ENCODE measurements at regions of chr7 and their contacts with region 1.

Region 1: DNA sequence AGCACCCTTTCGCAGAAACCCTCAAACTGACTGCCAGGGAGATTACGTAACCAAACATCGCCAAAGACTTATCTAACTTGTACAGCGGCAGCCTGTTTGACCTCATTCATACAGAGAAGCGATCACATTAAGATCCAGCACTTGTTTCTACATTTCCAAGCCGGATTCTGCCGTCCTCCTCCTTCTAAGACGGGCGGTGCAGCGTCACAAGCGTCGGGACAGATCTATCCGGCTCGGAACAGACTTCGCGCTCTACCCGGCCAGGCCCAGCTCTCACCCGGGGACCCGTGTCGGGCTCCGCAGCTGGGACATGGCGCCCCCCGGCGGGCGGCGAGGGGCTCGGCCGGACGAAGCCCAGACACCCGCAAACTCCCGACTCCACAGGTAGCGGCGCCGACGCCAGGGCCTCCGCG is 373 bp downstream of the H2AZ2 start:
- DNase-seq: peak; percentile 86 to 93 (median 90)
- H3K4me3 ChIP-seq: peak overlapping the region; percentile 77
- H3K27ac ChIP-seq: peak overlapping the region; percentile 92 to 99
- H3K4me1 ChIP-seq: peaks cover 9% of the 10 kb centered on the region
- H3K27me3 ChIP-seq: no peaks in the 10 kb centered on the region
- CTCF ChIP-seq: peak; percentile 86 to 96 (median 94)
- EP300 ChIP-seq: no peak
- POLR2A ChIP-seq: no peak

Region 2: DNA sequence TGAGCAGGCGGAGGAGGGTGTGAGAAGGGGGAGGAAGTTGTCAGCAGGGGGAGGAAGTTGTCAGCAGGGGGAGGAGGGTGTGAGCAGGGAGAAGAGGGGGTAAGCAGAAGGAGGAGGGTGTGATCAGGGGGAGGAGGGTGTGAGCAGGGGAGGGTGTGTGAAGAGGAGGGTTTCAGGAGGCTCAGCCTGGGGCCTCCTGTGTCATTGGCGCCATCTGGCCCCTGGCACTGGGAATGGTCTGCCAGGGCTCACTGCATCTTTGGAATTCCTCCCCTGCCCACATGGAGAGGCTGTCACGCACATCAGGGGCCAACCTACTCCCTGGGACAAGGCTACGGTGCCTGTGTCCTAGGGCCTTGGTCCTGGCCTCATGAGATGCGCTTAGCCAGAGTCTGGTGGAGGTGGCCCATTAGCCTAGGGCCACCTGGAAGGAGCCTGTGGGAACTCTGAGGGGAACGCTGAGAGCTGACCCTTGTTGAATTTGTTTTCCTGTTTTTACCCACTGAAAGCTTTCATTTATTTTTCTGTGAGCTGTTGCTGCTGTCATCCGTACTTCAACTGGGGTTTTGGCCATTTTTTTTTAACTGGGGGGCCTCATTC is 540.1 kb before region 1 on chr7:
- intact Hi-C with region 1: no loop called
- DNase-seq: peak in 2 of 5 donors; percentile 12 to 34
- H3K4me3 ChIP-seq: no peak overlapping the region
- H3K27ac ChIP-seq: no peak overlapping the region
- H3K4me1 ChIP-seq: no peaks in the 10 kb centered on the region
- H3K27me3 ChIP-seq: no peaks in the 10 kb centered on the region
- CTCF ChIP-seq: no peak
- EP300 ChIP-seq: no peak
- POLR2A ChIP-seq: no peak

Region 3: GRCh38 chr7:44490351-44491200 is 356.9 kb before region 1 on chr7 and contains the start of gene NUDCD3:
- intact Hi-C with region 1: loop called in 1 of 4 experiments (anchors 10 kb)
- DNase-seq: peak; percentile 77 to 86 (median 80)
- H3K4me3 ChIP-seq: peak within 1 kb of the TSS; percentile 83
- H3K27ac ChIP-seq: peak within 1 kb of the TSS; percentile 90 to 97
- H3K4me1 ChIP-seq: peaks cover 11% of the 10 kb centered on the region
- H3K27me3 ChIP-seq: no peaks in the 10 kb centered on the region
- CTCF ChIP-seq: peak in 1 of 3 donors; percentile 21
- EP300 ChIP-seq: peak; percentile 37
- POLR2A ChIP-seq: peak; percentile 45
- total RNA-seq, gene NUDCD3: 32.1 to 117 (median 102) TPM

Region 4: GRCh38 chr7:44581879-44582603 is 265.5 kb before region 1 on chr7 and contains the start of gene TMED4:
- intact Hi-C with region 1: loop called in 1 of 4 experiments (anchors 5 kb)
- DNase-seq: peak; percentile 100
- H3K4me3 ChIP-seq: peak within 1 kb of the TSS; percentile 99
- H3K27ac ChIP-seq: peak within 1 kb of the TSS; percentile 85 to 98
- H3K4me1 ChIP-seq: peaks cover 7% of the 10 kb centered on the region
- H3K27me3 ChIP-seq: no peaks in the 10 kb centered on the region
- CTCF ChIP-seq: no peak
- EP300 ChIP-seq: no peak
- POLR2A ChIP-seq: peak; percentile 70
- total RNA-seq, gene TMED4: 74.9 to 155 (median 95.9) TPM

Region 5: DNA sequence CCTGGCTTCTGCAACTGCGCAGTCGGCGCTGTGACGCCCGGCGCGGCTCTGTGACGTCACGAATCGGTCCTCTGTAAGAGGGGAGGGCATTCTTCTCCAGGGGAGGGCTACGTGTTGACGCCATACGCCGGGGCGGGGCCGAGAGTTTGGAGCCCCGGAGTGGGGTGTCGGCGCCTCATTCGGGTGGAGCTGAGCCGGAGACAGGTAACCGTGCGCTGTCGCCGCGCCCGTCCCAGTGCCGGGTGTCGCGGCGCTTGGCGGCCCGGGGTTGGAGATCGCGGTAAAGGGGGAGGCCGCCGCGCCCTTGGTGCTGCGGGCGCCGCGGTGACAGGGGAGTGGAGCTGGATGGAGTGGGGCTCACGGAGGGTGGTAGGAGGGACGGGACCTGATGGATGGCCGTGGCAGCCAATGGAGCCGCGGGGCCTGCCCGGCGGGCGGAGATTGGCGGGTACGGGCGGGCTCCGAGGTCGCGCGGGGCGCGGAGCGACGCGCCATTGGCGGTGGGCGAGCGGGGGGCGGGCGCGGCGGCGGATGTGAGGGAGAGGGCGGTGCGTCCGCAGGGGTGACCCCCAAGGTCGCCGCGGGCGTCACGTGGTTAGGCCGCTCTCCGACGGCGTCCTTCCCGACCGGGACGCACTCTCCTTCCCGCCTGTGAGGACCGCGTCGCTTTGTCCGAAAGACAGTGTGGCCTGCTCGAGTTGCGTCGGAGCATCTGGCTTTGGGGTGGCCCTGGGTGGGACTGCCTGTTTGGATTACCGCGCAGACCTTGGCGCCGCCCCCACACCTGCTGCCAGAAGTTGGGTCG is 240.9 kb before region 1 on chr7 and contains the start of gene OGDH:
- intact Hi-C with region 1: loop called in 1 of 4 experiments (anchors 1 kb)
- DNase-seq: peak; percentile 99
- H3K4me3 ChIP-seq: peak within 1 kb of the TSS; percentile 87
- H3K27ac ChIP-seq: peak within 1 kb of the TSS; percentile 95 to 98
- H3K4me1 ChIP-seq: peaks cover 2% of the 10 kb centered on the region
- H3K27me3 ChIP-seq: no peaks in the 10 kb centered on the region
- CTCF ChIP-seq: peak in 1 of 3 donors; percentile 49
- EP300 ChIP-seq: peak; percentile 83
- POLR2A ChIP-seq: peak; percentile 97
- total RNA-seq, gene OGDH: 25.9 to 84.6 (median 59.3) TPM

Region 6: GRCh38 chr7:44695381-44696155 is 151.9 kb before region 1 on chr7:
- intact Hi-C with region 1: no loop called
- DNase-seq: no peak
- H3K4me3 ChIP-seq: no peak overlapping the region
- H3K27ac ChIP-seq: no peak overlapping the region
- H3K4me1 ChIP-seq: no peaks in the 10 kb centered on the region
- H3K27me3 ChIP-seq: no peaks in the 10 kb centered on the region
- CTCF ChIP-seq: no peak
- EP300 ChIP-seq: no peak
- POLR2A ChIP-seq: no peak

Region 7: DNA sequence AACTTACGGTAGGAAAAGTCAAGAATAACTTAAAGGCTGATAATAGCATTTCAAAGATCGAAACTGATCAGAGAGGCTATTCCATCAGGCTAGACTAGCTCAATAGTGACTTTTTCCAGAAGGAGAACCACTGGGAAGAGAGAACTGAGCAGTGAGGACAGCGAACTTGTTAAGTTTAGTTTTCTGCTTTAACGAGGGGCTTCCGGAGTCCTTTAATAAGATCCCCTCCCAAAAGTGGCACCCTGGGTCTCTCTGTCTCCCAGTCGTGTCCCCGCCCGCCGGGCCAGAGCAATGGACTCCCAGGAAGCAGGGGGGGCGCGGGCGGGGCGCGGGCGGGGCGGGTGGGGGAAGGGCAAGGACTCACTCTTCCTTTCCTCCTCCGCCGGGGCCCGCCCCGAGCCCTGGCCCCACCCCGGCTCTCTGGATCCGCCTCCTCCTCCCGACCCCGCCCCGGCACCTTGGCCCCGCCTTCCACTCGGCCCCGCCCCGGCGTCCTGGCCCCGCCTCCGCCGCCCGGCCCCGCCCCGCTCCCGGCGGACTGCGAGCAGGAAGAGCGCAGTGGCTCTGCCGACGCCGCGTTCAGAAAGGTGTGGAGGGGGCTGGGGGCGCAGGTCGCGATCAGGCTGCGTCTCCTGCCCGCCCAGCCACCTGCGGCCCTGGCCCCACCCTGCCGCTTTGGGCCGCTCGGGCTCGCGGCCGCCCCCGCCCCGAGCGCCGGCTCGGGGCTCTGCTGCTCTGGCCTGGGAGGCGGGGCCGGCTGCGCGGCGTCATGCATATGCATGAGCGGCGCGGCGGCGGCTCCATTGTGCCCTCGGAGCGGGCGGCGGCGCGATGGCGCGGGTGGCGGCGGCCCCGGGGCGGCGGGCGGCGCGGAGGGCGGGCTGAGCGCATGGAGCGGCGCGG is 99.2 kb before region 1 on chr7 and contains the start of gene ZMIZ2:
- intact Hi-C with region 1: loop called in 1 of 4 experiments (anchors 5 kb)
- DNase-seq: peak; percentile 92 to 96 (median 95)
- H3K4me3 ChIP-seq: peak within 1 kb of the TSS; percentile 59
- H3K27ac ChIP-seq: peak within 1 kb of the TSS; percentile 95 to 99
- H3K4me1 ChIP-seq: peaks cover 11% of the 10 kb centered on the region
- H3K27me3 ChIP-seq: no peaks in the 10 kb centered on the region
- CTCF ChIP-seq: no peak
- EP300 ChIP-seq: no peak
- POLR2A ChIP-seq: peak; percentile 42
- total RNA-seq, gene ZMIZ2: 20.0 to 85.5 (median 69.4) TPM

Region 8: DNA sequence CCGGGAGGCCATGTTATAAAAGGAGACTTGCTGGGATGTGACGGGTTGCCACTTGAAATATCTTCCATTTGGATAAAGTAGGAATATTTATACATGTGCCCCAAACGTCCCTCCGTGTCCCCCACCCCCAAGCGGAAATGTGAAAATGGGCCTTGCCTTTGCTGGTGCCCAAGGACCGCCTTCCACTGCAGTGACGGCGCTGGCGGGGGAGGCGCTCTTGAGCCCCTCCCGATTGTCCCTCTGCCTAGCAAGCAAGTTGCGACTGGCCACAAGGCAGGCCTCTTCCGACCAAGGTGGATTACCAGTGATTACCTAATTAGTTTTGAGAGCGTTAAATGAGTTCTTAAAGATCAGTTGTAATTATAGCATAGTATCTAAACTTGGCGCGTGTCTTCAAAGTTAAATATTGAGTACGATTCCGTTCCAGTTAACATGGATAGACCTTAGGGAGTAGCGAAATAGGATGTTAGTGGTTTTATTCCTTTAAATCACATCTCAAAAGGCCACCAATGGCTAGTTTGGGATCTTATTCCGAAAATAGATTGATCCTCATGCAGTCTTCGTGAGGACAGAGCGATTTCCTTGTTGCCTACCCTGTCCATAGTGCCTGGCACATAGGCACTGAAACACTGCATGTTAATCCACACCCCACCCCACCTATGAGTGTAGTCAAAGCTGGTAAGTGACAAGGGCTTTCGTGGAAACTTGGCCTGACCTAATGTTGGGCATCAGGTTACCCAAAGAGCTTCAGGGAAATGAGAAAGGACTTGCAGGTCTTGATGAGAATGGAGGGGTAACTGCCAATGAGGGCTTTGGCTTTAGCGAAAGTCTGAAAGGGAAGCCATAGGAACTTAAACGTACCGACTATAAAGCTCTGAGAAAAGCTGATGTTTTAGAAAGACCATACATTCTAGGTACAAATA is 49.9 kb before region 1 on chr7:
- intact Hi-C with region 1: loop called in 2 of 4 experiments (anchors 2 to 5 kb)
- DNase-seq: peak; percentile 80 to 88 (median 85)
- H3K4me3 ChIP-seq: peak overlapping the region; percentile 79
- H3K27ac ChIP-seq: peak overlapping the region; percentile 93 to 95
- H3K4me1 ChIP-seq: peaks cover 3% of the 10 kb centered on the region
- H3K27me3 ChIP-seq: no peaks in the 10 kb centered on the region
- CTCF ChIP-seq: peak in 1 of 3 donors; percentile 36
- EP300 ChIP-seq: no peak
- POLR2A ChIP-seq: peak; percentile 36

Region 9: DNA sequence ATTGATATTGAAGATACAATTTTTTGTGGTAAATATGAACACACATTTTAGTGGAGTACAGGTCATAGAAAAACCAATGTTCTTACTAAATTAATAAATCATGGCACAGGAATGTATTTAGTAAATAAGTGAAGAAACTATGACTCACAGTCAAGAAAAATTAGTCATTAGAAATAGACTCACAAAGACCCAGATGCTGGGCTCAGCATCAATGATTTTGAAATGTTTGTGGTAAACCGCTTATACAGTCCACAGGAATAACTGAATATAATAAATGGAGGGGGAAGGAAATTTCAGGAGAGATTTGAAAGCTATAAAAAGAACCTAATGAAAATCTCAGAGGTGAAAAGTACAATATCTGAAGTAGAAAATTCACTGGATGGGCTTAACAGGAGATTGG is 588.3 kb after region 1 on chr7:
- intact Hi-C with region 1: no loop called
- DNase-seq: no peak
- H3K4me3 ChIP-seq: no peak overlapping the region
- H3K27ac ChIP-seq: no peak overlapping the region
- H3K4me1 ChIP-seq: no peaks in the 10 kb centered on the region
- H3K27me3 ChIP-seq: no peaks in the 10 kb centered on the region
- CTCF ChIP-seq: no peak
- EP300 ChIP-seq: no peak
- POLR2A ChIP-seq: no peak

Measured in ovary (tissue), 10 donors.